ENCODE measurements at regions of chr19 and their contacts with region 1.

Region 1: GRCh38 chr19:14136509-14137281 is at the start of gene ASF1B:
- DNase-seq: peak; percentile 99
- H3K4me3 Mint-ChIP-seq: peak within 1 kb of the TSS; percentile 81
- H3K27ac Mint-ChIP-seq: peak within 1 kb of the TSS; percentile 91
- H3K4me1 Mint-ChIP-seq: peaks cover 39% of the 10 kb centered on the region
- H3K27me3 Mint-ChIP-seq: no peaks in the 10 kb centered on the region
- total RNA-seq, gene ASF1B: 93.5 to 94.8 TPM

Region 2: DNA sequence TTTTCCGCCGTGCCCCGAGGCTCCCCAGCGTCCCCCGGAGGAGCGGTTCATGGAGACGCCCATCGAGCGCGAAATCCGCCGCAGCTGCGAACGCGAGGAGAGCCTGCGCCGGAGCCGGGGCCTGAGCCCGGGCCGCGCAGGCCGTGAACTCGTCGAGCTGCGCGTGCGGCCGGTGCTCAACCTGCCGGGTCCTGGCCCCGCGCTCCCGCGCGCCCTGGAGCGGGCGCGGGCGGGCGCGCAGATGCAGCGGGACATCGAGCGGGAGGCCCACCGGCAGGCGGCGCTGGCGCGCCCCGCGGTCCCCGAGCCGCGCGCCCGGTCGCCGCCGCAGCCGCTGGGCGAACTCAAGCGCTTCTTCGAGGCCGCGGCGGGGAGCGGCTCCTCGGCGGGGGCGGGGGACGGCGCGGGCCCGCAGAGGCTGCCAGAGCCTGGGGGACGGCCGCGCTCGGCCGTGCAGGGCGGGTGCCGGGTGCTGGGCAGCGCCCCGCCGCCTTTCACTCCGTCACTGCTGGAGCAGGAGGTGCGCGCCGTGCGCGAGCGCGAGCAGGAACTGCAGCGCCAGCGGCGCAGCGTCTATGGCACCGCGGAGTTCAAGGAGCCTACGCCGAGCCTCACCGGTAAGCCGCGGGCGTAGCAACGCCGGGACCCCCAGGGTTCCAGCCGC is 63.3 kb before region 1 on chr19:
- CTCF ChIA-PET with region 1: interaction called, 22 read pairs
- POLR2A ChIA-PET with region 1: interaction called, 16 read pairs
- DNase-seq: peak; percentile 78
- H3K4me3 Mint-ChIP-seq: peak overlapping the region; percentile 81
- H3K27ac Mint-ChIP-seq: peak overlapping the region; percentile 73
- H3K4me1 Mint-ChIP-seq: peaks cover 26% of the 10 kb centered on the region
- H3K27me3 Mint-ChIP-seq: peaks cover 2% of the 10 kb centered on the region

Region 3: GRCh38 chr19:14117668-14118164 is 19.0 kb before region 1 on chr19 and contains the start of gene PRKACA:
- CTCF ChIA-PET with region 1: interaction called, 25 read pairs
- POLR2A ChIA-PET with region 1: interaction called, 57 read pairs
- DNase-seq: peak; percentile 99
- H3K4me3 Mint-ChIP-seq: peak within 1 kb of the TSS; percentile 90
- H3K27ac Mint-ChIP-seq: peak within 1 kb of the TSS; percentile 65
- H3K4me1 Mint-ChIP-seq: peaks cover 46% of the 10 kb centered on the region
- H3K27me3 Mint-ChIP-seq: no peaks in the 10 kb centered on the region
- total RNA-seq, gene PRKACA: 48.1 to 49.8 TPM

Region 4: DNA sequence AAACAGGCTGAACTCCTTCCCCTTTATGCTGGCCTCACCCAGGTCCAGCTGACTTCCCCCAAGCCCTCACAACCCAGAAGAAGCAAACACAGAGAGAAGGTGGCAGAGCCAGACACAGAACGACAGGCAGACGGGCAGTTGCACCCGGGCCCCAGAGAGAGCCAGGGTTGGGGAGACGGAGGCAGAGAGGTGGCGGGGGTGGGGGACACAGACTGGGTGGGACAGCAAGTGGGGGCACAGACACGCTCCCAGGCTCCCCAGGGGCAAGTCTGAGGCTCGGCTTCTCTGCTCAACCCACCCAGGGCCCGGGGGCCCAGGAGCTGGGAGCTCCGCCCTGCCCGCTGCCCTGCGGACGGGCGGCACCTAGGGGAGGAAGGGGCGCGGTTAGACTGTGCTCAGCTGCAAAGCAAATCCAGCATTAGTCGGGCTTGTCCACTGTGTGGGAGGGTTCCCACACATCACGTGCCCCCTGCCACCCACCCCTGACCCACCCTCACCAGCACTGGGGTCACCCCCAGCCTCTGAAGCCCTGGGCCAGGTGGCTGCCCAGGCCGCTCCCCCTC is 31.0 kb after region 1 on chr19:
- CTCF ChIA-PET with region 1: interaction called, 10 read pairs
- POLR2A ChIA-PET with region 1: interaction called, 14 read pairs
- DNase-seq: peak; percentile 36
- H3K4me3 Mint-ChIP-seq: peak overlapping the region; percentile 70
- H3K27ac Mint-ChIP-seq: peak overlapping the region; percentile 71
- H3K4me1 Mint-ChIP-seq: peaks cover 27% of the 10 kb centered on the region
- H3K27me3 Mint-ChIP-seq: no peaks in the 10 kb centered on the region

Region 5: GRCh38 chr19:14354445-14354844 is 217.8 kb after region 1 on chr19:
- CTCF ChIA-PET with region 1: interaction called, 27 read pairs
- POLR2A ChIA-PET with region 1: interaction called, 7 read pairs
- DNase-seq: no peak
- H3K4me3 Mint-ChIP-seq: no peak overlapping the region
- H3K27ac Mint-ChIP-seq: no peak overlapping the region
- H3K4me1 Mint-ChIP-seq: peaks cover 38% of the 10 kb centered on the region
- H3K27me3 Mint-ChIP-seq: no peaks in the 10 kb centered on the region

Region 6: GRCh38 chr19:14413693-14414181 is 277.0 kb after region 1 on chr19:
- CTCF ChIA-PET with region 1: interaction called, 11 read pairs
- POLR2A ChIA-PET with region 1: interaction called, 12 read pairs
- DNase-seq: no peak
- H3K4me3 Mint-ChIP-seq: no peak overlapping the region
- H3K27ac Mint-ChIP-seq: peak overlapping the region; percentile 71
- H3K4me1 Mint-ChIP-seq: peaks cover 75% of the 10 kb centered on the region
- H3K27me3 Mint-ChIP-seq: no peaks in the 10 kb centered on the region